Psoas muscle (tissue), 8 donors: ENCODE measurements at regions of chr17 and their contacts with region 1.

Region 1: DNA sequence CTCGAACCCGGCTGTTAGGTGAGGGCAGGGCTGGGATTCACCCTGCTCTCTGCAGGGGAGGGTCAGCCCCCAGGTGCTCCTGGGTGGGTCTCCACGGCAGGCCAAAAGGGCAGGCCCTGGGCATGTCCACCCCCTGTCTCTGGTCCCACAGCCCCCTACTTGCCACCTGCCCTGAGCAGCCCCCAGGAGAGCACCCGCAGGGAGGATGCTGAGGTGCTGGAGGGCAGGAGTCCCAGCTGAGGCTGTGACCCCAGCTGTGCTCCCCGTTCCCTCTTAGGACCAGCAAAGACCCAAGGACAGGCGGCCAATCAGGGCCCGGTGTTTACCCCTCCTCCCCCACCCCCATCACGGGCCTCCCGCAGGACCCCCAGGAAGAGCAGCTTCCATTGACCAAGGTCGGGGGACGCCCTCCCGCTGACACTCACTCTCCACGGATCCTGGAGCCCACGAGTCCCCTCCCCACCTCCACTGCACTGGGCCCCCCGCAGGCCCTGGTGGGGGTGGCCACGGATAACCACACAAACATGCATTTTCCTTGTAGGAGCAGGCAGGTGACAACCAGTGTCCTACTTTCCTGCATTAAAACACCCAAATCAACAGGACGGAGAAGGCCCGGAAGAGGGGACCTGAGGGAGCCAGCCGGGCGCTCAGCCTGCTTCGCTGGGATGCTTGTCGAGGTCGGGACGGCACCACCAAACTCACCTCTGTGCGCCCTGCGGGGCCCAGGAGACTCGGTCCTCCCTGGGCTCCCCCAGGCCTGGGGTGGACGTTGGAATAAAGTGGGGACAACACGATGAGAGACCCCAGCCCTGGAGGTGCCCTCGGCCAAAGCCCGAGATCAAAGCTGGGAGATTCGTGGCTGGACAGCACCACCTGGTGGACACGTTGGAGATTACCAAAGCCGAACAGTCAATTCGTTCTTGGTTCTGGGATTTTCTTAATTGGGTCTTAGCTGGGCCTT is 22.5 kb upstream of the ENPP7 start:
- DNase-seq: peak in 1 of 2 donors; percentile 46
- ATAC-seq: peak; percentile 39 to 74 (median 59)
- H3K4me3 ChIP-seq: no peak overlapping the region
- H3K27ac ChIP-seq: no peak overlapping the region
- H3K4me1 ChIP-seq: no peaks in the 10 kb centered on the region
- H3K27me3 ChIP-seq: peaks cover 0 to 35% (median 6%) of the 10 kb centered on the region in 3 donors
- CTCF ChIP-seq: peak; percentile 75

Region 2: DNA sequence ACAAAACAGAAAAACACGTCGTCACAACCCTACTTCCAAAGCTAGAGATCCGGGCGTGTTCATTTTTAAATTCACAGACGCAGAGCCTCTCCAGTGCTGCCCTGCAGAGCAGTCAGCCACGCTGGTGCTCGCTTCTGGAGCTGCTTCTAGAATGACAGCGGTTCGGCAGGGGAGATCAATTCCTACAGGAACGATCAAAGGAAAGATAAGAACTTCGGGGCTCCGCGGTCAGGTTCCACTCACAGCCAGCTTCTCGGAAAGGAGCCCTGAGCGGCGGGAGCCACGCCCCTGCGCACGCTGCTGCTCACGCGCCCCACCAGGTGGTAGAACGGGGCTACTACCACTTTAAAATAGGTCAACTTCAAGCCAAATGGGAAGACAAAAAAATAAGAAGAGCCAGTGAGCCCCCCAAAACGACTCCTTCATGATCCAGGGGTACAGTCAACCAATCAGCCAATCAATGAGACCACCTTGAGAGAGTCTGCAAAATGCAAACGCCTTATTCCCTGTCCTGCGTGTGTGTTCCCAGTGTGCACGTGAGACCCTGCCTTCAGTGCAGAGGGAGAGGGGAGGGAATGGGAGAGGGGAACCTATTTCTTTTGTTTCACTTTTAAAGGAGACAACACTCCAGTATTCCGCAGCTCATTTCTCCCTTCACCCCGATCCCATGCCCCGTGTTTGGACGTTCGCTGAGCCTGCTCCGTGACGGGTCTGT is 307.1 kb before region 1 on chr17:
- intact Hi-C with region 1: loop called in 1 of 2 experiments (anchors 10 kb)
- DNase-seq: peak; percentile 62 to 78
- ATAC-seq: peak; percentile 85 to 96 (median 90)
- H3K4me3 ChIP-seq: peak overlapping the region; percentile 12
- H3K27ac ChIP-seq: no peak overlapping the region
- H3K4me1 ChIP-seq: no peaks in the 10 kb centered on the region
- H3K27me3 ChIP-seq: peaks cover 0 to 82% (median 37%) of the 10 kb centered on the region in 3 donors
- CTCF ChIP-seq: peak; percentile 81